K562 (cell line): ENCODE measurements at regions of chr17 and their contacts with region 1.

Region 1: DNA sequence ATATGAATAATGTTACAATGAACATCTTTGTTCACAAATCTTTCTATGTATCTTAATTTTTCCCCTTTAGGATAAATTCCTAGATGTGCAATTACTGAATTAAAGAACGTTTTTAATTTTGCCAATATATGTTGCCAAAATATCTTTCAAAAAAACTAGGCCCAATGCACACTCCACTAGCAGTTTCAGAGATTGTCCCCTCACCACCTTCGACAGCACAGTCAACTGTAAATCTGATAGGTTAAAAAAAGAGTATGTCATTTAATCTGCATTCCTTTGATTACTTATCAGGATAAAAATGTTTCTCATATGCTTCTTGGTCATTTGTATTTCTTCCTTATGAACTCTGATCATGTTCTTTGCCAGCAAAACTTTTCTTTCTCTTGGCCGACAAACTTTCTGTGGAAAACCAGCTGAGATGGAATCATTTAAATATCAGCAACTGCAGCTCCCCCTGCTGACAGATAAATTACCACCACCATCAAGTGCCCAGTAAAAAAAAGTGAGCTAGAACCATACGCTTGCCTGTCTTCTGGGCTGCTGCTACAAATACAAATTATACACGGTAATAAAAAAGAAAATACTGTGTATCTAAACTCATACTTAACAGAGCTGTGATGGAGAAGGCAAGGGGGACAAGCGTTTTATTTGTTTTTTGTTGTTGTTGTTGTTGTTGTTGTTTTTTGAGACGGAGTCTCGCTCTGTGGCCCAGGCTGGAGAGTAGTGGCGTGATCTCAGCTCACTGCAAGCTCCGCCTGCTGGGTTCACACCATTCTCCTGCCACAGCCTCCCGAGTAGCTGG is 19.6 kb upstream of the KANSL1 start:
- DNase-seq: peak; percentile 64 to 82 (median 68)
- ATAC-seq: peak; percentile 93
- H3K4me3 ChIP-seq: no peak overlapping the region
- H3K27ac ChIP-seq: no peak overlapping the region
- H3K4me1 ChIP-seq: peaks cover 0 to 4% of the 10 kb centered on the region in 2 experiments; a peak in 1 of 5 replicates
- H3K27me3 ChIP-seq: no peaks in the 10 kb centered on the region
- CTCF ChIP-seq: peak; percentile 85 to 96 (median 88)
- EP300 ChIP-seq: no peak
- POLR2A ChIP-seq: no peak
- RAD21 ChIP-seq: peak; percentile 88 to 89

Region 2: DNA sequence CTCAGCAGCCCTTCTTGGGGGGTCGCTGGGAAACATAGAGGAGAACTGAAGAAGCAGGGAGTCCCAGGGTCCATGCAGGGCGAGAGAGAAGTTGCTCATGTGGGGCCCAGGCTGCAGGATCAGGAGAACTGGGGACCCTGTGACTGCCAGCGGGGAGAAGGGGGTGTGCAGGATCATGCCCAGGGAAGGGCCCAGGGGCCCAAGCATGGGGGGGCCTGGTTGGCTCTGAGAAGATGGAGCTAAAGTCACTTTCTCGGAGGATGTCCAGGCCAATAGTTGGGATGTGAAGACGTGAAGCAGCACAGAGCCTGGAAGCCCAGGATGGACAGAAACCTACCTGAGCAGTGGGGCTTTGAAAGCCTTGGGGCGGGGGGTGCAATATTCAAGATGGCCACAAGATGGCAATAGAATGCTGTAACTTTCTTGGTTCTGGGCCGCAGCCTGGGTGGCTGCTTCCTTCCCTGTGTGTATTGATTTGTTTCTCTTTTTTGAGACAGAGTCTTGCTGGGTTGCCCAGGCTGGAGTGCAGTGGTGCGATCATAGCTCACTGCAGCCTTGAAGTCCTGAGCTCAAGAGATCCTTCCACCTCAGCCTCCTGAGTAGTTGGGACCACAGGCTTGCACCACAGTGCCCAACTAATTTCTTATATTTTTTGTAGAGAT is 210.4 kb before region 1 on chr17:
- CTCF ChIA-PET with region 1: interaction called, 14 read pairs
- POLR2A ChIA-PET with region 1: no interaction called
- in situ Hi-C with region 1: loop called (anchors 5 kb)
- intact Hi-C with region 1: loop called (anchors 2 kb)
- DNase-seq: peak; percentile 74 to 79 (median 76)
- ATAC-seq: peak; percentile 95
- H3K4me3 ChIP-seq: no peak overlapping the region
- H3K27ac ChIP-seq: no peak overlapping the region
- H3K4me1 ChIP-seq: peaks cover 0 to 12% of the 10 kb centered on the region in 2 experiments; a peak in 2 of 5 replicates
- H3K27me3 ChIP-seq: no peaks in the 10 kb centered on the region
- CTCF ChIP-seq: peak; percentile 88 to 91 (median 91)
- EP300 ChIP-seq: no peak
- POLR2A ChIP-seq: no peak
- RAD21 ChIP-seq: peak; percentile 79 to 91

Region 3: DNA sequence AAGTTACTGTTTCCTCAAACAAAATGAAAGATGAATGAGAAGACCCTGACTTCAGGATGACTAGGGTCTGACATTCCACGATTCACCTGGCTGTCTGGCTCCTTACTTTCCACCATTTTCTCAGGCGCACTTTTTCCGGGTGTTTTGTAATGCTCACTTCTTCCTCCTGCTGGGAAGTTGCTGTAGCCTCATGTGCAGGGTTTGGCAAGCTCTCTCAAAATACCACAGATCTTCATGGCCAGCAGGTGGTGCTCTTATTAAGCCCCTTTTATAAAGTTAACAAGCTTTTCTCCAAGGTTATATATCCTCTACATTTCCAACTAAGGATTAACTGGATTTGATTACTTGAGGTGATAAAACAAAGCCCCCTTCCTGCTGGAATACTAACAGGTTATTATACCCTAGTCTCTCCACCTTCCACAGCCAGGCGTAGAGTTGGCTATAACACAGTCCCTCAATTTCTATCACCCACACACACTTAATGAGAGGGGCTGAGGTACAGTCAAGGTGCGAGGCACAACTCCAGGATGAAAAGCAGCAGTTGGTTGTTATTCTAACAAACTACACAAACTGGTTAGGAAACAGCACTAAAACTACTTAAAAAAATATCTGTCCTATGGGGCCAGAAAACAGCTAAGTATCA is 168.4 kb before region 1 on chr17:
- CTCF ChIA-PET with region 1: interaction called, 24 read pairs
- POLR2A ChIA-PET with region 1: no interaction called
- in situ Hi-C with region 1: no loop called
- intact Hi-C with region 1: no loop called
- DNase-seq: peak; percentile 52 to 83 (median 60)
- ATAC-seq: peak; percentile 93
- H3K4me3 ChIP-seq: no peak overlapping the region
- H3K27ac ChIP-seq: no peak overlapping the region
- H3K4me1 ChIP-seq: peaks cover 0 to 5% of the 10 kb centered on the region in 2 experiments; a peak in 2 of 5 replicates
- H3K27me3 ChIP-seq: no peaks in the 10 kb centered on the region
- CTCF ChIP-seq: peak; percentile 92 to 98 (median 98)
- EP300 ChIP-seq: no peak
- POLR2A ChIP-seq: no peak
- RAD21 ChIP-seq: peak; percentile 78

Region 4: DNA sequence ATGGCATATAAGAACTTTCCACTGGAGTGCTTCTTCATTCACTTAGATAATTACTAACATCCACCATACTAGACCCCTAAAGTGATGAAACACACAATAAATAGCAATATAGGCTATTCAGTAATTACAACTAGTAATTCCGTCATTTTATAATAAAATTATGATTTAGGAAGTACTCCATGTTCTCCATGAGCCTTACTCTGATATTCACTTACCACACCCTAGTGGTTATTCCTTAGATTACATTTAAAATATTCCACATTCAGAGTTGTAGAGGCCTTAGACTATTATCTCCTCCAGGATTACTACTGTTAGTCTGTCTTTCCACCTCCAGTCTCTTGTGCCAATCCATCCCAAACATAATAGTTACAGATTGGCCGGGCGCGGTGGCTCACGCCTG is 151.4 kb before region 1 on chr17:
- CTCF ChIA-PET with region 1: no interaction called
- POLR2A ChIA-PET with region 1: no interaction called
- in situ Hi-C with region 1: no loop called
- intact Hi-C with region 1: loop called (anchors 5 kb)
- DNase-seq: peak in 1 of 4 experiments; percentile 35
- ATAC-seq: peak; percentile 84
- H3K4me3 ChIP-seq: no peak overlapping the region
- H3K27ac ChIP-seq: no peak overlapping the region
- H3K4me1 ChIP-seq: peaks cover 0 to 5% of the 10 kb centered on the region in 2 experiments; a peak in 2 of 5 replicates
- H3K27me3 ChIP-seq: no peaks in the 10 kb centered on the region
- CTCF ChIP-seq: peak in 1 of 3 experiments; percentile 56; a peak in 3 of 6 replicates
- EP300 ChIP-seq: no peak
- POLR2A ChIP-seq: no peak
- RAD21 ChIP-seq: peak in 1 of 2 experiments; percentile 37; a peak in 2 of 4 replicates

Region 5: DNA sequence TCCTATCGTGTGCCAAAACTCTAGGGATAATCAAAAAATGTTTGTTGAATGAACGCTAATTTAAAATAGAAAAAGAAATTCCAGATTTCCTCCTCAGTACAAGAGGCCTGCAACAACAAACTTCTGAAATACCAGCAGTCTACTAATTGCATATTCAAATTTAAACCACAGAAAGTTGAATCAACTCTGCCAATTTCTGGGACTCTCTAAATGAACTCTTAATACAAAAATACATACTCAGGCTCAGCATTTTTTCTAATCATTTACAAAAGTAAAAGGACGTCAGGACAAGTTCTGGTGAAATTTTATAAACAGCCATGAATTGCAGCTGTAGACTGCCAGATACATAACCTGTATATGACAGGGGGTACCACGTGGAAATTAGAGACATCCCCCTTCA is 68.6 kb before region 1 on chr17:
- CTCF ChIA-PET with region 1: no interaction called
- POLR2A ChIA-PET with region 1: no interaction called
- in situ Hi-C with region 1: no loop called
- intact Hi-C with region 1: no loop called
- DNase-seq: no peak
- ATAC-seq: no peak
- H3K4me3 ChIP-seq: no peak overlapping the region
- H3K27ac ChIP-seq: no peak overlapping the region
- H3K4me1 ChIP-seq: peaks cover 11 to 12% of the 10 kb centered on the region in 2 experiments; a peak in 4 of 5 replicates
- H3K27me3 ChIP-seq: no peaks in the 10 kb centered on the region
- CTCF ChIP-seq: no peak
- EP300 ChIP-seq: no peak
- POLR2A ChIP-seq: no peak
- RAD21 ChIP-seq: no peak

Region 6: DNA sequence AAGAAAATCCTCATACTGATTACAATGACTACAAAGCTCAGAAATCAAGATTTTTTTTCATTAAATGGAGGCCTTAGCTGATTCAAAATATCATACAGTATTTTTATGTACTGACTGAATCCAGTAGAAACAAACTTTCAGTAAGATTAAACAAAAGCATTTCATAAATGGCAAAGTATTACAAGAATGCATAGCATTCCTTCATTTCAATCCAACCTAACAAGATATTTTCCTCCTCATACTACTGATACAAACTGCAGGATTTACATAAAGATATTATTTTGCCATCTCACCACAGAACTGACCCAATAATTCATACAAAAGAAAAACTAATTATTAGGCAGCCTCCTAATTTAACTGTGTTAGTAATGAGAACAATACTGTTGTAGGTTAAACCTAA is 13.5 kb before region 1 on chr17:
- CTCF ChIA-PET with region 1: interaction called, 13 read pairs
- POLR2A ChIA-PET with region 1: interaction called, 12 read pairs
- in situ Hi-C with region 1: no loop called
- intact Hi-C with region 1: loop called (anchors 2 kb)
- DNase-seq: no peak
- ATAC-seq: no peak
- H3K4me3 ChIP-seq: no peak overlapping the region
- H3K27ac ChIP-seq: no peak overlapping the region
- H3K4me1 ChIP-seq: peaks cover 3 to 12% of the 10 kb centered on the region in 2 experiments; a peak in 3 of 5 replicates
- H3K27me3 ChIP-seq: no peaks in the 10 kb centered on the region
- CTCF ChIP-seq: no peak
- EP300 ChIP-seq: no peak
- POLR2A ChIP-seq: no peak
- RAD21 ChIP-seq: no peak